ENCODE measurements at regions of chr16 and their contacts with region 1.

Region 1: DNA sequence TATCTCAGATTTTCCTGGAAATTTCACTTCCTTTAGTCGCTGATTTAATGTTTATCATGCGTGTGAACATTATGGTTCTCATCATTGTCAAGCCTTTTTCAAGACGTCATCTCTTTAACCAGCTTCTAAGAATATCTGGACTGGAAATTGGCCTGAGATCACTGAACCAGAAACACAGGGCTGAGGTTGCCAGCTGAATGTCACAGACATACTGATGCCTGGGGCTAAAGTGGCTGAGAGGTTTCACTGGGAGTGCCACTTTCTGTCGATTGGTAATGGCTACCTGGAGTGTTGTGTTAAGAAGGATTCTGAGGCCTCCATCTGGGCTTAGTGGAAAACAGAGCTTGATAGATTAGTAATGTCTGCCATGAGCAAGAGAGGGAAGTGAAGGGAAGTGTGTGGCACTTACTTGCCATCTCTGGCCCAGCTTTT is 54.2 kb downstream of the CRISPLD2 start:
- DNase-seq: peak; percentile 55
- H3K4me3 ChIP-seq: peak overlapping the region; percentile 20
- H3K27ac ChIP-seq: peak overlapping the region; percentile 82
- H3K4me1 ChIP-seq: peaks cover 60% of the 10 kb centered on the region
- CTCF ChIP-seq: no peak

Region 2: DNA sequence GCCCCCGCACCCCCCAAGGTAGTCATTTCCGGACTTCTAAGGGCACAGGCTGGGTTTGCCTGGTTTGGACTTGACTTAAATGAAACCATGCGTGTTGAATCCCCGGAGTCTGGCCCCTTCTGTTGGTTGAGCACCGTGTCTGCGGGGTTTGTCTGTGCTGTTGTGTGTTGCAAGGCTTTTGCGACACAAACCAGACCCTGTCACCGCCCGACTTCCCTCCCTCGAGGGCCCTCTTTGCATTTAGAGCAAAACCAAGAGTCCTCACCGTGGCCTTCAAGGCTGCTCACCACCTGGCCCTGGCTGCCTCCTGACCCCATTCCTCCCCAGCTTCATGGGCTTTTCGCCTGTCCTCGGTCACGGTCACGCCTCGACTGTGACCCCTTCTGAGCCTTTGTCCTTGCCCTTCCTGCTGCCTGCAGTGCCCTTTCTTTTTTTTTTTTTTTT is 46.9 kb before region 1 on chr16:
- CTCF ChIA-PET with region 1: no interaction called
- POLR2A ChIA-PET with region 1: no interaction called
- intact Hi-C with region 1: no loop called
- DNase-seq: no peak
- H3K4me3 ChIP-seq: no peak overlapping the region
- H3K27ac ChIP-seq: no peak overlapping the region
- H3K4me1 ChIP-seq: no peaks in the 10 kb centered on the region
- CTCF ChIP-seq: no peak

Region 3: DNA sequence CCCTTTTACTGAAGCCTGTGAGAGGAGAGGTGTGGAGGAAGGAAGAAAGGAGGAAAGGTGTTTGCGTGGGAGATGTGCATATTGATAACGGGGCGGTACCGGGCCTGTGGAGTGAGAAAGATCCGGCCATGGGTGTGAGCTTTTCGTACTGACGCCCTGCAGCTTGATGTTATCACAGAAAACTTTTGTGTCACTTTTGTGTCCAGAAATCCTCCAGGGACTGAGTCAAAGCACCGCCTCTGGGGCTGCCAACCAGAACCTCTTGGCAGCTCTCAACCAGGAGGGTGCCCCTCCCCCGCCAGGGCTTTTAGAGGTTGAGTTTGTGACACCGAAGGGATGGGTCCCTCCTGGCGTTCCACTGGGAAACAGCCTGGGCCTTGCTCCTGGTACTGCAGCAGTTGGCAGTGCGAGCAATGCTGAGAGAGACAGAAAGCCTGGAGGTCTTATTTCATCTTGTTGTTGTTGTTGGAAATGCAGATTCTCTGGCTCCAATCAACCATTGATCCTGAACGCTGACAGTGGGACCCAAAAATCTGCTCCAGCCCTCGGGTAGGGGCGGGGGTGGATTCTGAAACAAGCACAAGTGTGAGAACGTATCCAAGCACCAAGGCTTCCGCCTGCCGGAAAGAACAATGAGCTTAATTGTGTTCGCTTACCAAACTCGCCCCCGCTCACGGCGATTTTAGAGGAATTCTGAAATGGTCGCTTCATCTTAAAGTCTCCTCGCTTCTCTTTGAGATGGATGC is 10.7 kb after region 1 on chr16:
- CTCF ChIA-PET with region 1: no interaction called
- POLR2A ChIA-PET with region 1: interaction called, 19 read pairs
- intact Hi-C with region 1: no loop called
- DNase-seq: no peak
- H3K4me3 ChIP-seq: no peak overlapping the region
- H3K27ac ChIP-seq: no peak overlapping the region
- H3K4me1 ChIP-seq: peaks cover 34% of the 10 kb centered on the region
- CTCF ChIP-seq: no peak

Measured in OCI-LY7 (cell line).